ENCODE measurements at regions of chr14 and their contacts with region 1.

Region 1: DNA sequence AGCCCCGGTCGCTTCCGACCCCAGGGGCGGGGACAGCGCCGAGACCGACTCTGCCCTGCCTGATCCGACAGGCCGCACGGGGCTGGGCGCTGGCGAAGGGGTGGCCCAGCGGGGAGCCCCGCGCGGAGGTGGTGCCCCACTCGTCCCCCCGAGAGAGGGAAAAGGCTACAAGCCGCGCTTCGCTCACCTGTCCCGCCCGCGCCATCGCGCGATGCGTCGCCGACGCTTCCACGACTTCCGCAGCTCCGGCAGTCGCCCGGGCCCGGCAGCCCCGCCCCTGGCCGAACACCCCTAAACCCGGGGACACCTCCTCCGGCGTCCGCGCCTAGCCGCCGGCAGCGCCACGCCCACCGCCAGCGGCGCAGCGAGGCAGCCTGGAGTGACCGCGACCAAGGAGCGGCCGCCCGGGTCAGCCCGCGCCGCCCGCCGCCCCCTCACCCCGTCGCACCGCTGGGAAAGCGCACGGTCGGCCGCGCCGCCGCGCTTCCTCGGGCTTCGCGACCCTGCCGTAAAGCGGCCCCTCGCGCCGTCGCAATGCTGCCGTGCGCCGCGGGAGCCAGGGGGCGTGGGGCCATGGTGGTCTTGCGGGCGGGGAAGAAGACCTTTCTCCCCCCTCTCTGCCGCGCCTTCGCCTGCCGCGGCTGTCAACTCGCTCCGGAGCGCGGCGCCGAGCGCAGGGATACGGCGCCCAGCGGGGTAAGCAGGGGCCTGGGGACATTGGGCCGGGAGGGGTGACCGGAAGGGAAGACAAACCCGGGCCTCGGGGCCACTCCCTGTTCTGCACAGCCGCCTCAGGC is at the starts of genes BAG5 and COA8:
- H3K4me3 Mint-ChIP-seq: peak within 1 kb of the TSS; percentile 94
- H3K27ac Mint-ChIP-seq: peak within 1 kb of the TSS; percentile 90
- H3K4me1 Mint-ChIP-seq: peaks cover 46% of the 10 kb centered on the region
- H3K27me3 Mint-ChIP-seq: no peaks in the 10 kb centered on the region

Region 2: DNA sequence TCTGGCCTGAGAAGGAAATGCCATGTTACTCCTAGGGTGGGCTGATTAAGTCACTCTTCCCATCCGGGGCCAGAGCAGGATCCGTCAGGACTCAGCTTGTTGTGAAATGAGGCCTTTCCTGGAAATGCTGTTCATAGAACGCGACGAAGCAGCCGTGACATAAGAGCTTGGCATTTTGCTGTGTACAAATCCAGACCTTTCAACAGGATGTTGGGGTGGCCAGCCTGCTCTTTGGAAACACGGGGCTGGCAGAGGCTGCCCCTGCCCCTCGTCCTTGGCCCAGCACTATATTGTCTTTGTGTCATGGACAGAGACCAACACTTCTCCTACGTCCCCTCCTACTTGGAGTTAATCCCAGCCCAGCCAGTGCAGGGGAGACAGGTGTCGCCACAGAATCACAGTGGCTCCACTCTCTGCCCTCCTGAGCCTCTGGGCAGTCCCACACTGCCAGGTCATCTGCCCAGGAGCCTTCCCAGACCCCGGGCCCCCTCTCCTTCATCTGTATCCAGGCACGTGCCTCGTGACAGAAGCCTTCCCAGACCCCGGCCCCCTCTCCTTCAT is 247.2 kb before region 1 on chr14:
- intact Hi-C with region 1: no loop called
- H3K4me3 Mint-ChIP-seq: no peak overlapping the region
- H3K27ac Mint-ChIP-seq: peak overlapping the region; percentile 69
- H3K4me1 Mint-ChIP-seq: peaks cover 33% of the 10 kb centered on the region
- H3K27me3 Mint-ChIP-seq: peaks cover 15% of the 10 kb centered on the region

Region 3: DNA sequence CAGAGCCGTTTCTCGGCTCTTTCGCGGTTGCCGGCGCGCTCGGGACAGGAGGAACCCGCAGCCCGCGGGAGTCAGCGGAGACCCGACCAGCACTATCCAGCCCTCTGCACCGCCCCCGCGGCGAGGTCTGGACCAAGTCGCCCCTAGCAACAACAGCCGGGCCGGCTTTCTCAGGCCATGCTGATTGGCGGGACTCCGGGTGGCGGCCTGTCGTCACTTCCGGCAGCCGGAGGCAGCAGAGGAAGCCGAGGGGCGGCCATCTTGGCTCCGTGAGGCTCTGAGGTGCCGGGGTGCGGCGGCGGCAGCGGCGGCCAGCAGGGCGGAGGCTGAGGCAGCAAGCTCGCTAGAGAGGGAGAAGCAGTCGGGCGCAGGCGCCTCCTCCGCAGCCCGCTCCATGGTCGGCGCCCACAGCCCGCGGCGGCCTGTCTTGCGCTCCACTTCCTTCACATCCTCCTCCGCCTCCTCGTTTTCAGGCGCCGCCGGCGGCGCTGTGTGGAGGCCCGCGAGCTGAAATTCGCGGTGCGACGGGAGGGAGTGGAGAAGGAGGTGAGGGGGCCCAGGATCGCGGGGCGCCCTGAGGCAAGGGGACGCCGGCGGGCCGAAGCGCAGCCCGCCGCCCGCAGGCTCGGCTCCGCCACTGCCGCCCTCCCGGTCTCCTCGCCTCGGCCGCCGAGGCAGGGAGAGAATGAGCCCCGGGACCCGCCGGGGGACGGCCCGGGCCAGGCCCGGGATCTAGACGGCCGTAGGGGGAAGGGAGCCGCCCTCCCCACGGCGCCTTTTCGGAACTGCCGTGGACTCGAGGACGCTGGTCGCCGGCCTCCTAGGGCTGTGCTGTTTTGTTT is 177.3 kb before region 1 on chr14 and contains the start of gene MARK3:
- intact Hi-C with region 1: no loop called
- H3K4me3 Mint-ChIP-seq: peak within 1 kb of the TSS; percentile 90
- H3K27ac Mint-ChIP-seq: peak within 1 kb of the TSS; percentile 91
- H3K4me1 Mint-ChIP-seq: peaks cover 44% of the 10 kb centered on the region
- H3K27me3 Mint-ChIP-seq: no peaks in the 10 kb centered on the region

Region 4: DNA sequence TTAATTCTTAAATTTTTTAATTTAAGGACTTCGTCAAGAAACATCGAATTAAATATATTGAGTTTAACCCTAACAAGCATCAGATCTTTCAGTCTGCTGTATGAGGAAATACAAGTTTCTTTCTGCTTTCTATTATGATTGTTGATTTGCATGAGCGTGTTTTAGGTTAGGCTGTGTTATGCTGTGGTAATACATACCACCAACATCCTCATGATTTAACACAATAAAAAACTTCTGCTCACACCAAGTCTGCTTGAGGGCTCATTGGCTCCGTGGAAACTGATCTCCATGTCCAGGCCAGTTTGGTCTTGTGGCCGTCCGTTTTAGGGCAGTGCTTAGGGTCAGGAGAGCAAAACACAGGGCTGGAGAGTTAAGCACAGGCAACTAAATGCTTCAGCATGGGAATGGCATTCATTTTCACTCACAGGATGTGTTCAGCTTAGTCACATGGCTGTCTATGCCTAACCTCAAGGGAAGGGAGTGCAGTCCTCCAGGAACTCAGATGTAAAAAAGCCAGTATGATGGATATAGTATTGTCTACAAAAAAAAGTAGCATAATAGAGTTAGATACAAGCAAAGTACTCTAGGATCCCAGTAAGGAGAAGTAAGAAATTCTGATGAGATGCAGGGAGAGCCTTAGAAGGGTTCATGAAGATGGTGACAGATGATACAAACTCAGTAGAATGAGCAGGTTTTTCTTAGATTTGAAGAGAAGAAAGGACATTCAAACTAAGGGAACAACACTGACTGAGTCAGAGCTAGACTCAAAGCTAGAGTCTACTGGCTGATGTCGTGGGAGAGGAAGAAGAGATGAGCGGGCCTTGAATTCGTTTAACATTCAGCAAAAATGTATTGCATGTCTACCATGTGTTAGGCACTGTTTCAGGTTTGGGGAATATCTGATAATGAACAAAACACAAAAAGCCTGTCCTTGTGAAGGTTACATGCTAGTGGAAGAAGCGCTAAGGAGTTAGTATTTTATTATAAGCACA is 161.1 kb before region 1 on chr14:
- intact Hi-C with region 1: no loop called
- H3K4me3 Mint-ChIP-seq: no peak overlapping the region
- H3K27ac Mint-ChIP-seq: peak overlapping the region; percentile 33
- H3K4me1 Mint-ChIP-seq: peaks cover 56% of the 10 kb centered on the region
- H3K27me3 Mint-ChIP-seq: no peaks in the 10 kb centered on the region

Region 5: DNA sequence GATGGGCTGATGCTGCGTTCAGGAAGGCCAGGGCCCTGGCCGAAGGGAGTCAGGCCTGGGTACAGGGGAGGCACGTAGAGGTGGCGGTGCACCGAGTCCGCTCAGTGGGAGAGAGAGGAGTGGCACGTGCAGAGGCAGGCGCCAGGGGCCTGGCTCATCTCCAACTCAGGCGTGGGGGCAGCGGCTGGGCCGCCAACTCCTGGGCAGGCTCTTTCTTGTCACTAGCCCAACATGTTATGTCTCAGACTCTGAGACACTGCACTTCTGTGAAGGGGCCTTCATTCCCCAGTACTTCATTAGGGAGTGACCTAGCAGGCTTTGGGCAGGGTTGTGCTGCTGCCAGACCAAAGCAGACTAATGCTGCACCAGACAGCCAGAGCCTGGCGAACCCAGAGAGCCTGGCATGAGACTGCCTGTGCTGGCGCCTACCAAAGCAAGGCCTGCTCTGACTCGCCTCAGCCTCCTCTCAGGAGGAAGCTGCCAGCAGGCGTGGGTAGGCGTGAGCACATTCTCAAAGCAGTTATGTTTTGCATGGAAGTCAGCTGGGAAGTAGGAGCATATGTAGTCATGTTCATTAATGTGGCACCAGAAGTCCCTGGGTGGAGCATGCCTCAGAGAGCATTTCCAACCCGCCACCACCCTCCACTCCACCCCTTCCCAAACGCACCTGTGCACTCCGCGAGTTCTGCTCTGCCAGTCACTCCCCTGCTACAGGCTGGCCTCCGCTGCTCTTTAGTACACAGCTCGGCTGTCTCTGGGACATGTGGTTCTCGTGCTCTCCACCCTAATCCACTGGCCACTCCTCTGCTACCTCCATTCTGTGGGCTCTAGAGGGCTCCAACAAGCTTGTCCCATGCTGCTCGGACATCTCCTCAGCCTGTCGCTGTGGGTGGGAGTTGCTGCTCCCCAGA is 49.7 kb before region 1 on chr14:
- intact Hi-C with region 1: no loop called
- H3K4me3 Mint-ChIP-seq: no peak overlapping the region
- H3K27ac Mint-ChIP-seq: peak overlapping the region; percentile 67
- H3K4me1 Mint-ChIP-seq: peaks cover 13% of the 10 kb centered on the region
- H3K27me3 Mint-ChIP-seq: peaks cover 2% of the 10 kb centered on the region

Region 6: GRCh38 chr14:103528587-103529382 is 33.8 kb before region 1 on chr14 and contains the start of gene TRMT61A:
- intact Hi-C with region 1: loop called (anchors 5 kb)
- H3K4me3 Mint-ChIP-seq: peak within 1 kb of the TSS; percentile 97
- H3K27ac Mint-ChIP-seq: peak within 1 kb of the TSS; percentile 85
- H3K4me1 Mint-ChIP-seq: peaks cover 91% of the 10 kb centered on the region
- H3K27me3 Mint-ChIP-seq: peaks cover 12% of the 10 kb centered on the region

Region 7: GRCh38 chr14:103715052-103716000 is 152.7 kb after region 1 on chr14 and contains the starts of genes XRCC3 and ZFYVE21:
- intact Hi-C with region 1: loop called (anchors 5 kb)
- H3K4me3 Mint-ChIP-seq: peak within 1 kb of the TSS; percentile 96
- H3K27ac Mint-ChIP-seq: peak within 1 kb of the TSS; percentile 80
- H3K4me1 Mint-ChIP-seq: peaks cover 57% of the 10 kb centered on the region
- H3K27me3 Mint-ChIP-seq: no peaks in the 10 kb centered on the region